Lower leg skin (tissue), 4 donors: ENCODE measurements at regions of chr3 and their contacts with region 1.

Region 1: GRCh38 chr3:16343101-16343500 is 78.1 kb downstream of the OXNAD1 start:
- DNase-seq: no peak
- H3K4me3 ChIP-seq: no peak overlapping the region
- CTCF ChIP-seq: no peak
- POLR2A ChIP-seq: no peak

Region 2: GRCh38 chr3:16370872-16371740 is 28.0 kb after region 1 on chr3:
- intact Hi-C with region 1: loop called (anchors 1 kb)
- DNase-seq: no peak
- H3K4me3 ChIP-seq: no peak overlapping the region
- CTCF ChIP-seq: no peak
- POLR2A ChIP-seq: no peak